ENCODE measurements at regions of chr5 and their contacts with region 1.

Region 1: GRCh38 chr5:35777358-35778087 is 79.2 kb upstream of the IL7R start:
- DNase-seq: peak; percentile 71 to 76 (median 75)
- H3K4me3 ChIP-seq: no peak overlapping the region
- H3K4me3 Mint-ChIP-seq: peak overlapping the region; percentile 75 to 86 (median 83)
- H3K27ac ChIP-seq: peak overlapping the region; percentile 54
- H3K27ac Mint-ChIP-seq: peak overlapping the region; percentile 81 to 98 (median 96)
- H3K4me1 ChIP-seq: peaks cover 73% of the 10 kb centered on the region
- H3K4me1 Mint-ChIP-seq: peaks cover 57 to 84% (median 69%) of the 10 kb centered on the region in 4 donors
- H3K27me3 ChIP-seq: no peaks in the 10 kb centered on the region
- H3K27me3 Mint-ChIP-seq: no peaks in the 10 kb centered on the region

Region 2: GRCh38 chr5:35089334-35090314 is 687.9 kb before region 1 on chr5:
- CTCF ChIA-PET with region 1: no interaction called
- POLR2A ChIA-PET with region 1: no interaction called
- intact Hi-C with region 1: loop called (anchors 10 kb)
- DNase-seq: peak; percentile 44 to 53 (median 46)
- H3K4me3 ChIP-seq: no peak overlapping the region
- H3K4me3 Mint-ChIP-seq: no peak overlapping the region
- H3K27ac ChIP-seq: no peak overlapping the region
- H3K27ac Mint-ChIP-seq: peak overlapping the region in 1 of 7 donors; percentile 32
- H3K4me1 ChIP-seq: no peaks in the 10 kb centered on the region
- H3K4me1 Mint-ChIP-seq: no peaks in the 10 kb centered on the region
- H3K27me3 ChIP-seq: no peaks in the 10 kb centered on the region
- H3K27me3 Mint-ChIP-seq: peaks cover 4 to 5% of the 10 kb centered on the region in 2 donors

Region 3: DNA sequence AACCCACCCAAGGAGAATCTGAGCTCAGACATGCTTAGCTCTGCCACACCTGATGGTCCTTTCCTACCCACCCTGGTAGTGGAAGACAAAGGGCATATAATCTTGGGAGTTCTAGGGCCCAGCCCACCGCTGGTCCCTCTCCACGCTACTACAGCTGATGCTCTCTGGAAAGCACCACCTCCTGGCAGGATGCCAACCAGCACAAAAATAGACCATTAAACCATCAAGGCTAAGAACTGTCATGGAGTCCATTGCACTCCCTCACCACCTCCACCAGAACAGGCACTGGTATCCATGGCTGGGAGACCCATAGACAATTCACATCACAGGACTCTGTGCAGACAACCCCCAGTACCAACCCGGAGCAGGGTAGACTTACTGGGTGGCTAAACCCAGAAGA is 31.9 kb before region 1 on chr5:
- CTCF ChIA-PET with region 1: no interaction called
- POLR2A ChIA-PET with region 1: no interaction called
- intact Hi-C with region 1: no loop called
- DNase-seq: no peak
- H3K4me3 ChIP-seq: no peak overlapping the region
- H3K4me3 Mint-ChIP-seq: no peak overlapping the region
- H3K27ac ChIP-seq: no peak overlapping the region
- H3K27ac Mint-ChIP-seq: peak overlapping the region in 2 of 7 donors; percentile 23 to 53
- H3K4me1 ChIP-seq: no peaks in the 10 kb centered on the region
- H3K4me1 Mint-ChIP-seq: peaks cover 17 to 42% (median 20%) of the 10 kb centered on the region in 4 donors
- H3K27me3 ChIP-seq: no peaks in the 10 kb centered on the region
- H3K27me3 Mint-ChIP-seq: peaks cover 0 to 2% of the 10 kb centered on the region in 2 donors

Region 4: DNA sequence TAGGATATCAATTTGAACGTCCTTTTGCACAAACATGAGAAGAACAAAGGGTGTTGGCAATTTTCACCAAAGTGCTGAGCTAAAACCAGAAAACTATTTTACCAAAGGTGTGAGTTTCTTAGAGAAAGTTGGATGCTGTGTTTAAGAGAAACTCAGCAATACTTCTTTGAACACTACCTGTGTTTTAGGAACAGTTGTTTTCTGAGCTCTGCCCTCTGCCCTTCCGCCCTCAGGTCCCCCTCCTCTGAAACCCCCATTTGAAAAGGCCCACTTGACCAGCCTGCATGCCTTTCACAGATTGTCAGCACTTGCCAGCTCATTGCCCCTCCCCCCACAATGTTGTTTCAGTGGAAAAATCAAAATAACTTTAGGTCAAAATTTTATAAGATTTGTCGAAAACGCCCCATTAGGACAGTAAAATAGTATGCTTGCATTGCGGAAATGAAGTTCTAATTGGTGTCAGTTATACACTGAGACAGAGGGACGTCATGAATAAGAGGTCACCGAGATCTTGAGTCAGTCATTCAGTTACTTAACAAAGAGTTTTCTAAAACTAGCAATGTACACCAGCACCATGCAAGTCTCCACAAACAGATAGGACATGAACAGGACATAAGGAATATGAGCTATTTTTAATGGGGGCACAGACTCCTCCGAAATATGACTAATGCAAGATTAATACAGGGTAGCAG is 17.3 kb after region 1 on chr5:
- CTCF ChIA-PET with region 1: interaction called, 52 read pairs
- POLR2A ChIA-PET with region 1: interaction called, 60 read pairs
- intact Hi-C with region 1: loop called (anchors 2 kb)
- DNase-seq: no peak
- H3K4me3 ChIP-seq: peak overlapping the region in 1 of 2 donors; percentile 22
- H3K4me3 Mint-ChIP-seq: peak overlapping the region; percentile 33 to 89 (median 60)
- H3K27ac ChIP-seq: peak overlapping the region; percentile 12
- H3K27ac Mint-ChIP-seq: peak overlapping the region; percentile 84 to 97 (median 89)
- H3K4me1 ChIP-seq: peaks cover 88% of the 10 kb centered on the region
- H3K4me1 Mint-ChIP-seq: peaks cover 57 to 92% (median 78%) of the 10 kb centered on the region in 4 donors
- H3K27me3 ChIP-seq: no peaks in the 10 kb centered on the region
- H3K27me3 Mint-ChIP-seq: no peaks in the 10 kb centered on the region

Region 5: GRCh38 chr5:35815089-35815936 is 37.8 kb after region 1 on chr5:
- CTCF ChIA-PET with region 1: interaction called, 56 read pairs
- POLR2A ChIA-PET with region 1: interaction called, 233 read pairs
- intact Hi-C with region 1: loop called (anchors 1 kb)
- DNase-seq: peak in 3 of 5 donors; percentile 51 to 55 (median 53)
- H3K4me3 ChIP-seq: peak overlapping the region in 1 of 2 donors; percentile 26
- H3K4me3 Mint-ChIP-seq: no peak overlapping the region
- H3K27ac ChIP-seq: peak overlapping the region; percentile 47
- H3K27ac Mint-ChIP-seq: no peak overlapping the region
- H3K4me1 ChIP-seq: peaks cover 97% of the 10 kb centered on the region
- H3K4me1 Mint-ChIP-seq: peaks cover 32 to 43% (median 36%) of the 10 kb centered on the region in 4 donors
- H3K27me3 ChIP-seq: no peaks in the 10 kb centered on the region
- H3K27me3 Mint-ChIP-seq: no peaks in the 10 kb centered on the region

Region 6: GRCh38 chr5:35830587-35830986 is 53.1 kb after region 1 on chr5:
- CTCF ChIA-PET with region 1: interaction called, 16 read pairs
- POLR2A ChIA-PET with region 1: interaction called, 65 read pairs
- intact Hi-C with region 1: no loop called
- DNase-seq: peak; percentile 80 to 90 (median 85)
- H3K4me3 ChIP-seq: peak overlapping the region in 1 of 2 donors; percentile 41
- H3K4me3 Mint-ChIP-seq: peak overlapping the region; percentile 21 to 72 (median 56)
- H3K27ac ChIP-seq: peak overlapping the region; percentile 45
- H3K27ac Mint-ChIP-seq: peak overlapping the region; percentile 57 to 99 (median 84)
- H3K4me1 ChIP-seq: peaks cover 97% of the 10 kb centered on the region
- H3K4me1 Mint-ChIP-seq: peaks cover 67 to 96% (median 88%) of the 10 kb centered on the region in 4 donors
- H3K27me3 ChIP-seq: no peaks in the 10 kb centered on the region
- H3K27me3 Mint-ChIP-seq: no peaks in the 10 kb centered on the region

Region 7: GRCh38 chr5:35857606-35858205 is 80.2 kb after region 1 on chr5:
- CTCF ChIA-PET with region 1: interaction called, 154 read pairs
- POLR2A ChIA-PET with region 1: interaction called, 1,081 read pairs
- intact Hi-C with region 1: loop called (anchors 1 kb)
- DNase-seq: peak in 3 of 5 donors; percentile 41 to 45 (median 44)
- H3K4me3 ChIP-seq: peak overlapping the region; percentile 82 to 85
- H3K4me3 Mint-ChIP-seq: peak overlapping the region; percentile 88 to 99 (median 96)
- H3K27ac ChIP-seq: peak overlapping the region; percentile 97
- H3K27ac Mint-ChIP-seq: peak overlapping the region; percentile 94 to 100 (median 100)
- H3K4me1 ChIP-seq: peaks cover 55% of the 10 kb centered on the region
- H3K4me1 Mint-ChIP-seq: peaks cover 42 to 73% (median 51%) of the 10 kb centered on the region in 4 donors
- H3K27me3 ChIP-seq: no peaks in the 10 kb centered on the region
- H3K27me3 Mint-ChIP-seq: no peaks in the 10 kb centered on the region

Region 8: DNA sequence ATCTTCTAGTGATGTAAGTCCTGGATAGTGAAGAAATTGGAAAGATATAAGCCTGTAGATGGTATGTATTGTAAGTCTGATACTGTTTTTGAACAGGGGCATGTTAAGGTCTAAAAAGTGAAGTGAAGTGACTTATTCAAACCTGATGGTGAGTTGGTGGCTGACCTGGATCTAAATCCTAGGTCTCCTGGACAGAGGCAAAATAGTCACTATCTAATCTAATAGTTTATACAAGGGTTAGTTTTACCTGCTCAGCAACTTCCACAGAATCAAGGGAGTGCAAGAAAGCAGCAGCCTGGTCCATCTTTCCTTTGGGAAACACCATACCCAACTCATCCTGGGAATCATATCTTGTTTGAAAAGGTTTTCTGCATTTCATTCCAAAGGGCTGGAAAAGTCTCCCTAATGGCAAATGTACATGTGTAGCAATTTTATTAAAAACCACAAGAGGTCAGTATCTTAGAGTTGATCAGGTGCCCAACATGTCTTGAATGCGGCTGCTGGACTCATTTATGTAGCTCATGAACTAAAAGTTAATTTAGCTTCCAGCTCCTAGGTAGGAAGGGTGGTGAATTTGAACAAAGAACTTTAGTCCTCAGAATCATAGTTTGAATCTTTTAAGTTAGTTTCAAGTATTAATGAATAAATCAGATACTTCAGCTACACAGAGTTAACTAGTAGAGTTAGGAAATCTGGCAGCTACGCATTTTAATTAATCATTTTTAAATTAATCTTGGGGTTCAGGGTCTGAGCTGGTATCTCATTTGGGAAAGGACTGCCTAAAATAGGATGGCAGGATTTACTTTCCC is 400.4 kb after region 1 on chr5:
- CTCF ChIA-PET with region 1: no interaction called
- POLR2A ChIA-PET with region 1: no interaction called
- intact Hi-C with region 1: no loop called
- DNase-seq: no peak
- H3K4me3 ChIP-seq: no peak overlapping the region
- H3K4me3 Mint-ChIP-seq: no peak overlapping the region
- H3K27ac ChIP-seq: no peak overlapping the region
- H3K27ac Mint-ChIP-seq: no peak overlapping the region
- H3K4me1 ChIP-seq: no peaks in the 10 kb centered on the region
- H3K4me1 Mint-ChIP-seq: peaks cover 0 to 2% (median 0%) of the 10 kb centered on the region in 4 donors
- H3K27me3 ChIP-seq: no peaks in the 10 kb centered on the region
- H3K27me3 Mint-ChIP-seq: no peaks in the 10 kb centered on the region

Region 9: DNA sequence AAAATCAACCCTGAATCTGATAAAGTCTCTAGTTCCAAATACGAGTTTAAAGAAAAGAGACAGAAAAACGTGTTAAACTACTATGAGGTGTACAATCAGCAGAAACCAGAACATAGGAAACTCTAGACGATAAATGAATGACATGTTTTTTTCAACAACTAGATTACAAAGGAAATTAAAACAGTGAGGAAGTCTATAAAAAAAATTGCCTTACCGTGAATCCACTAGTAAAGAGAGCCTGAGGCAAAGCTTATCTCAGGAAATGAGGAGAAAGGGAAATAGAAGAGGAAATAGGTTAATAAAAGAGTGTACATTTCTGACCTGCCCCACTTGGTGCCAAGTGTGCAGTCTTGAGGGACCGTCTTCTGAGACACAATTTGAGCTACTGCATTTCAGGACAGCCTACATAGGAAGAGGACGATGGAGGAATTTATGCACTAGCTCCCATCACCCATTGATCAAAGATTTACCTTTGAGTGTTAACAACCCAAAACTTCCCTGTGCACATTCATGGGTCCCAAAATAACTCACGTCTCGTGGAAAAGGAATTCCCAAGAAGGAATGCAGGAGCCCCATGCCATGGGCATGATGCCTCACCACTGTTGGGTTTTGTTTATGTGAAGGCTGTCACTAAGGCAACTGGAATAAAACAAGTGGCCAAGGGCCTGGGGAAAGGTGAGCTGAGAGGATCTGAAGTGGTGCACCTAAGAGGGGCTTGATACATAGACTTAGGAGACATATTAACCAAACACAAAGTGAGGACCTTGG is 775.3 kb after region 1 on chr5:
- CTCF ChIA-PET with region 1: no interaction called
- POLR2A ChIA-PET with region 1: no interaction called
- intact Hi-C with region 1: no loop called
- DNase-seq: no peak
- H3K4me3 ChIP-seq: no peak overlapping the region
- H3K4me3 Mint-ChIP-seq: no peak overlapping the region
- H3K27ac ChIP-seq: no peak overlapping the region
- H3K27ac Mint-ChIP-seq: no peak overlapping the region
- H3K4me1 ChIP-seq: no peaks in the 10 kb centered on the region
- H3K4me1 Mint-ChIP-seq: no peaks in the 10 kb centered on the region
- H3K27me3 ChIP-seq: no peaks in the 10 kb centered on the region
- H3K27me3 Mint-ChIP-seq: peaks cover 0 to 2% of the 10 kb centered on the region in 2 donors

Measured in CD4-positive, alpha-beta memory T cell (primary cell).